AG04449 (cell line): ENCODE measurements at regions of chr19 and their contacts with region 1.

Region 1: DNA sequence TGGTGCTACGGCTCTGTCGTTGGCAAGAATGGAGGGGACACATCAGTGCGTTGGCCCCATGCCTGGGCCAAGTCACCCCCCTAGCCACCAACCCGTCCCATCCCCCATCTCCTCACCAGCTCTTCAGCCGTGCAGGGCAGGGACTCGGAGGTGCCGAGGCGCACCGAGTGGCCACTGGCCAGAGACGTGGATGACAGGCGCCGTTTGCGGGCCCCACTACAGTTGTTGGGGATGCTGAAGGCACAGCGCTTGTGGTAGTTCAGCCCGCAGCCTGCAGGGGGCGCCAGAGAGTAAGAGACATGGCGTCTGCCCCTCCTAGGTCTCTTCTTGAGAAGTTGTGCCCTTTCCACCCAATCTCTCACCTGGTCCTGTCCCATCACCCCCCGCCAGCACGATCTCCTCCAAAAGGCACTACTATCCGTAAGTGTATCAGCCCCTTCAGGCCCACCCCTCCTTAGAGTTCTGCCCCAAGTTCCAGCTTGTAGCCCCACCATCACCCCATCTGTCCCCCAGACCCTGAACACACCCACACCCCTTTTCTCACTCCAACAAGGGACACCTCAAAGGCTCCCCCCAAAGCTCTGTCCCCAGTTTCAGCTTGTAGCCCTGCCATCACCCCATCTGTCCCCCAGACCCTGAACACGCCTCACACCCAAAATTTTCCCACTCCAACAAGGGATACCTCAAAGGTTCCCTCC is 12.4 kb downstream of the PRKD2 start:
- DNase-seq: no peak
- H3K4me3 ChIP-seq: no peak overlapping the region
- CTCF ChIP-seq: peak; percentile 91

Region 2: GRCh38 chr19:46621191-46622117 is 83.1 kb before region 1 on chr19:
- CTCF ChIA-PET with region 1: no interaction called
- POLR2A ChIA-PET with region 1: no interaction called
- DNase-seq: no peak
- H3K4me3 ChIP-seq: no peak overlapping the region
- CTCF ChIP-seq: no peak

Region 3: GRCh38 chr19:46634045-46634655 is 70.4 kb before region 1 on chr19:
- CTCF ChIA-PET with region 1: interaction called, 10 read pairs
- POLR2A ChIA-PET with region 1: no interaction called
- DNase-seq: no peak
- H3K4me3 ChIP-seq: peak overlapping the region; percentile 54
- CTCF ChIP-seq: no peak

Region 4: DNA sequence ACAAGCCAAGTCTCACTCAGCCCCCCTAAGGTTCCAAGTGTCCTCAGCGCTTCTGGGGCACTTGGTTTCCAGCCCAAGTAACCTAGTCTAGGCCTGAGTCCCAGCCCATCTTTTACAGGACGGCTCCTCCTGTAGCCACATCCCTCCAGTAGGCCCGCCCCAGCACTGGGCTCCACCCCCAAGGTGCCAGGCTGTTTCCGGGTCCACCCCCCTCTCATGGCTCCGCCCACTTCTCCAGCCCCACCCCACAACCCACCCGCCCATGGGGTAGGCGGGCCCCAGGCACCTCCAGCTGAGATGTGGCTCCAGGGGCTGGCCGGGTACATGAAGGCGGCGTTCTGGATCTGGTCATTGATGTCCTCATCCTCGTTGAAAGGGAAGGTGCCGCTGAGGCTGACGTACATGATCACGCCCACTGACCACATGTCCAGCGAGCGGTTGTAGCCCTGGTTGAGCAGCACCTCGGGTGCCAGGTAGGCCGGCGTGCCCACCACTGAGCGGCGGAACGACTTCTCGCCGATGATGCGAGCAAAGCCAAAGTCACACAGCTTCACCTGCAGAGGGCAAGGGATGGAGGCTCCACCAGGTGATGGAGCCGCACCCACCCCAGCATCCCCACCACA is 26.3 kb before region 1 on chr19:
- CTCF ChIA-PET with region 1: interaction called, 39 read pairs
- POLR2A ChIA-PET with region 1: no interaction called
- DNase-seq: no peak
- H3K4me3 ChIP-seq: no peak overlapping the region
- CTCF ChIP-seq: no peak

Region 5: DNA sequence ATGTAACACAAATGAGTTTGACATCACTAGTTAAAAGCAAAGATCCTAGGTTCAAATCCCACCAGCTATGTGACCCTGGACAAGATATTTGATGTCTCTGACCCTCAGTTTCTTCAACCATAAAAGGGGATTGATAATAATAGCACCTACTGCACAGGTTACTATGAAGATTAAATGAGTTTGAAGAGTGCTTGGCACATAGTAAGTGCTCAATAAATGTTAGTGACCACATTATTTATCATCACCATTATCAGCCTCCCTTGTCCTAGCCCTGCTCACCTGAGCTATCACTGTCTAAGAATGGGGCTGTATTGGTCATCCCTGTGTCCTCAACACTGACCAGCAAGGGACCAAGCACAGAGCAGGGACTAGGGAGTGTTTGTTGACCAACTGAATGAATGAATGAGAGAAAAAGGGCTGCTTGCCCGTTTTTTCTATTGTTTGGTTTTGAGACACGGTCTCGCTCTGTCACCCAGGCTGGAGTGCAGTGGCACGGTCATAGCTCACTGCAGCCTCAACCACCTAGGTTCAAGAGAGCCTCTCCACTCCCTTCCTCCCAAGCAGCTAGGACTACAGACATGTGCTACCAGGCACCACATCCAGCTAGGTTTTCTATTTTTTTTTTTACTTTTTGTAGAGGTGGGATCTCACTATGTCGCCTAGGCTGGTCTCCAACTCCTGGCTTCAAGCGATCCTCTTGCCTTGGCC is 16.9 kb before region 1 on chr19:
- CTCF ChIA-PET with region 1: interaction called, 83 read pairs
- POLR2A ChIA-PET with region 1: no interaction called
- DNase-seq: no peak
- H3K4me3 ChIP-seq: no peak overlapping the region
- CTCF ChIP-seq: no peak

Region 6: GRCh38 chr19:46717034-46717723 is 12.7 kb after region 1 on chr19 and contains the start of gene PRKD2:
- CTCF ChIA-PET with region 1: interaction called, 116 read pairs
- POLR2A ChIA-PET with region 1: no interaction called
- DNase-seq: no peak
- H3K4me3 ChIP-seq: peak within 1 kb of the TSS; percentile 78
- CTCF ChIP-seq: no peak

Region 7: DNA sequence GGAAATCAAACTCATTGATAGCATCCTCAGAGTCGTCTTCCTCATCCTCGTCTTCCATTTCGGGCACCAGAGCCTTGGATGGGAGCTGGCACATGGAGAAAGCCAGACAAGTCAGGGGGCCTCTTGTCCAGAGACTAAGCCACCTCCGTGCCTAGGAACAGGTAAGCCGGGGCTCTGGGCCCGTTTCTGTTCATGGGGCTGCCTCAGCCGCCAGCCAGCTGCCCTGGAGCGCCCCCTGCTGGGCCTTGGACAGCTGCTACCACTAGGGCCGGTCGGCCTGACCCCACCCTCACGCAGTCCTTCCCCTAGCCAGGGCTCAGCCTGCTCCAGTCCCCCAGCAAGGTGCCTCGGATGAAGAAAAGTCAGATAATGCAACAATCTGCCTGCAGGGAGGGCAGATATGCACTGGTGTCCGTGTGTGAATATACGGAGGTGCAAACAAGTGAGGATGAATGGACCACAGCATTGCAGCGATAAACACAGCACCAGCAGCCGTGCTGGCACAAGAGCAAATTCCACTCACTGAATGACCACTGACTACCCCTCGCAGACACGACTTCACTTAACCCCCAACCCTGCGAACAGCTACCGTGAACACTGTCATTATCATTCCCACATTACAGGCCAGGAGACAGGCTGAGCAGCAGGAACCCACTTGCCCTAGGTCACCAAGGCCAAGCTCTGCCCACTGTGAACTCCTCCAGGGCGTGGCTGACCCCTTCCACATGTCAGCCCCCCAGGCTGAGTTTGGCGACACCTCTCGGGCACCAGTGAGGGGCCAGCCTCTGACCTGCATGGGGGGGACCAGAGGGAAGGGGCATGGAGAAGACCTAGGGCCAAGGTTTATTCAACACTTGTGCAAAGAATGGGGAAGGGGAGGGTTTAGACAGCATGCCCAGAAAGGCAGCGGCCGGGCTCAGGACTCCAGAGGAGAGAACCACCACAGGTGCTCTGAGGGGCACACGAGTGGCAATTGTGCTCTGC is 24.5 kb after region 1 on chr19:
- CTCF ChIA-PET with region 1: interaction called, 54 read pairs
- POLR2A ChIA-PET with region 1: no interaction called
- DNase-seq: no peak
- H3K4me3 ChIP-seq: no peak overlapping the region
- CTCF ChIP-seq: peak; percentile 90

Region 8: DNA sequence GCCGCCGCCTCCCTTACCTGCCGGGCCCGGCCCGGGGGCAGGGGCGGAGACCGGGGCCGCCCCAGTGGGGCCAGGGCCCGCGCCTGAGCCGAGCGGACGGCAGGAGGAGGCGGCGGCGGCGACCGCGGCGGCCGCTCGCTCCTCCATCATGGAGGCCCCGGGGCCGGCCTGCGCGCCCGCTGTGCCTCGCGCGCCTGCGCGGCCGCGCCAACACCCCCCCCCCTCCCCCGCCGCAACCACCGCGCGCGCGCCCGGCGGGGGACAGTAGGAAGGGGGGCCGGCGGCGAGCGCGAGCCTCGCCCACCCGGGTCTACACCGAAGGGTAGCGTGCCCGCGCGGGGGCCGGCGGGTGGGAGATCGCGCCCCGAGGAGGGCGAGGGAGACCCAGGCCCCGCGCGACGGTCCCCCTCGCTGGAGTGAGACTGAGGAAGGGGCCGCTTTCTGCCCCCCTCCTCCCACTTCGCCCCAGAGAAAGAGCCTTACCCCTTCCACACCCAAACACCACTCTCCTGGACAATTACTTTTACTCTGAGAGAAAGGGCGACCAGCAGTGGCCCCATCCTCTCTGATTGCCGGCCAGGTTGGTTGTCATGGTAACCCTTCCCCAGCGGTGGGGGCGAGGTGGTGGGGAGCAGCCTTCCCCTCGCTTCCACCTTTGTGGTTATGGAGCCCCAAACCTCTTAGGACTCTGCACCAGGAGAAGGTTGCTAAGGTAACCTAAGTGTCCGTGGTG is 41.9 kb after region 1 on chr19 and contains the start of gene STRN4:
- CTCF ChIA-PET with region 1: interaction called, 10 read pairs
- POLR2A ChIA-PET with region 1: no interaction called
- DNase-seq: no peak
- H3K4me3 ChIP-seq: peak within 1 kb of the TSS; percentile 91
- CTCF ChIP-seq: no peak